Activated T-helper 1 cell treated with anti-CD3 and anti-CD28 coated beads, Interleukin-12 subunit alpha, Interleukin-12 subunit beta, Interleukin-2, Interleukin-4 antibody, amounts not matched to agents 30 ng/mL and 10 ng/mL and 1 ng/mL, durations not matched to agents 14 hours and 24 hours and 36 hours (primary cell): ENCODE measurements at regions of chr3 and their contacts with region 1.

Region 1: DNA sequence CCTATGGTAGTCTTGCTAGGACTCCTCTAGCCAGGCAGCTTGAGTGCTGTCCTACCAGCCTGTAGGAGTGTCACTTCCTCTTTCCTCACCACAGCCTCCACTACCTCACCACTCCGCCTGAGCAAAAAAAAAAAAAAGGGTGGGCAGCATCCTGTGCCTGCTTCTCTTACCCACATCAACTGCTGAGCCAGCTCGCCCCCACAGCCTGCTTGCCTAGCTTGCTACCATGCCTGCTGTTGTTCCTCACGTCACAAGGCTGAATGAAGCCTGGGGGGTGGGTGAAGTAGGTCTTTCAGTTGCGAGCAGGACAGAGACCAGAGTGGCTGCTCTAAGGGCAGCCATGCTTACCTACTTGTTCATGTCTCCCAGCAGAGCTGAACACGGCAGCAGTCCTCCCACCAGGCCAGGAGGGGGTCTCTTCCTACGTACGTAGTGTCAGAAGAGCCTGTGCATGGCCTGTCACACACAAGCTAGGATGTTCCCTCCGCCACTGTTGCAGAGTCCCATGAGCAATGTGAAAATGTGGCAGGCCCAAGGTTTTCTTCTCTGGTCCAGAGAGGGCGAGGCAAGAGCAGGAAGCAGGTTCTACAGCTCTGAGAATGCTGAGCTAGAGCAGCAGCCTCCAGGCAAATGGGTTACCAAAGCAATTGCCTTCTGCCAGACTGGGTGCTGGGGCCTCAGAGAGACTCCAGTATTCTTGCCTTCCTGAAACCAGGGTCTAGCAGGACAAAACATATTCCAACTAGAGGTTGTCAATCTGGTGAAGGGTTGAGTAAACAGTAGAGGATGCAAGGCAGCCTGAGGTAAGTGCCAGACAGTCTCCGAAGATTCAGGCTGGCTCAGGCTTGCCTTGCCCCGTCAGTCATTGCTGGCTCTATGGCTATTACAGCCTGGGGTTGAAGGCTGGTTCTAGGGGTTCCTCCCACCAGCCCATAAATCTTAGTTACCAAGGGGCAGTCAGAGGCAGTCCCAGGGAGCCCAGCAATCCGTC is 8.1 kb downstream of the PPM1M start:
- DNase-seq: peak; percentile 82
- H3K4me3 Mint-ChIP-seq: peak overlapping the region; percentile 86
- H3K27ac Mint-ChIP-seq: peak overlapping the region; percentile 99
- H3K4me1 Mint-ChIP-seq: peaks cover 81% of the 10 kb centered on the region
- H3K27me3 Mint-ChIP-seq: no peaks in the 10 kb centered on the region

Region 2: DNA sequence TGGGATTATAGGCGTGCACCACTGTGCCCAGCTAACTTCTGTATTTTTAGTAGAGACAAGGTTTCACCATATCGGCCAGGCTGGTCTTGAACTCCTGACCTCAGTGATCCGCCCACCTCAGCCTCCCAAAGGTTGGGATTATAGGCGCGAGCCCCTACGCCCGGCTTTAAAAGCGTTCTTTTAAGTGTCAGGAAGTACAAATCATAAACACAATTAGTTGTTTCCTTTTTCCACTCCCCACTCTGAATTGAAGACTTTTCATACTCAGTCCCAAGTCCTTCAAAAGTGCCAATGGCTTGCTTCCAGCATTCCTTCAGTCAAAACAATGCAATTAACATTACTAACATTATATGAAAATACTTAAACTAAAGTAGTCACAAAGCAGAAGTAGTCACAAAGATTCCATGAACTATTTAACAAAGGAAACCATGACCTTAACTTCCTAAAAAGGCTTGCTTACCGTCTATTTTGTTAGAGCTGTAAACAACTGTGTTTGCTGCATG is 16.7 kb after region 1 on chr3:
- intact Hi-C with region 1: loop called (anchors 1 kb)
- DNase-seq: no peak
- H3K4me3 Mint-ChIP-seq: peak overlapping the region; percentile 81
- H3K27ac Mint-ChIP-seq: peak overlapping the region; percentile 88
- H3K4me1 Mint-ChIP-seq: peaks cover 76% of the 10 kb centered on the region
- H3K27me3 Mint-ChIP-seq: no peaks in the 10 kb centered on the region

Region 3: GRCh38 chr3:52278510-52279069 is 25.0 kb after region 1 on chr3 and contains the start of gene WDR82:
- intact Hi-C with region 1: loop called (anchors 1 kb)
- DNase-seq: peak; percentile 95
- H3K4me3 Mint-ChIP-seq: peak within 1 kb of the TSS; percentile 97
- H3K27ac Mint-ChIP-seq: peak within 1 kb of the TSS; percentile 99
- H3K4me1 Mint-ChIP-seq: peaks cover 70% of the 10 kb centered on the region
- H3K27me3 Mint-ChIP-seq: no peaks in the 10 kb centered on the region
- total RNA-seq, gene WDR82: 105 and 107 TPM in 2 replicates